ENCODE measurements at regions of chrX and their contacts with region 1.

Region 1: GRCh38 chrX:69133921-69134542 is 31.2 kb downstream of the PJA1 start:
- DNase-seq: peak in 1 of 2 experiments; percentile 49
- H3K4me3 ChIP-seq: no peak overlapping the region
- H3K27ac ChIP-seq: no peak overlapping the region
- H3K4me1 ChIP-seq: peaks cover 7 to 34% (median 26%) of the 10 kb centered on the region in 4 experiments
- H3K27me3 ChIP-seq: peaks cover 0 to 10% (median 4%) of the 10 kb centered on the region in 4 experiments; a peak in 4 of 7 replicates
- CTCF ChIP-seq: peak; percentile 41 to 77 (median 70)
- EP300 ChIP-seq: no peak
- POLR2A ChIP-seq: no peak
- RAD21 ChIP-seq: peak; percentile 50 to 70

Region 2: DNA sequence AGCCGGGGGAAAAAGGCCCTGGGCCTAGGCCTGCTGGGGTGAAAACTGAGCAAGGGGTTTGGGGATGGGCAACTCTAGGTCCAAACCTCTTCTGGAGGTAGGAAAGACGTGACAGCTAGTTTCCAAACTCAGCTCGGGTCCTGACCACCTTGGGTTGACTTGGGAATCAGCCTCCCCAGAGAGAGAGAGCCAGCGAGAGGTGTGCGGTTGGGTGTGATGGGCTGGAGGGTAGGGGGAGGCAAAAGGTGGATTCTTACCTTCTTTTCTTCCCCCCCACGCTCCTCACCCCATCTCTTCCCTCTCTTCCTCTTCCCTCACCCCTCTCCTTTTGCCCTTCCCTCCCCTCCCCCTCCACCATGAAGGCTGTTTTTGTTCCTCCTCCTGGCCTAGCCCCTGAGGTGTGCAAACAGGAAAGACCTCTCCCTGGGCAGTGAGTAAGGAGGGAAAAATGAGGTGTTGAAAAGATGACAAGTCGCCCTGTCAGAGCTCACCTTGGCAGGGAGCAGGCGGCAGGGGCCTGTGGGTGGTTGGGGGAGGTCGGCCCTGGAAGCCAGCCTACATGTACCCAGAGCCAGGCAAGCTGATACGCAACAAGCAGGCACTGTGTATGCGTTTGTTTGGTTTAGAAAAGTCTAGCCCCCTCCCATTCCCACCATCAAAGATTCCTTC is 16.4 kb after region 1 on chrX:
- CTCF ChIA-PET with region 1: interaction called, 9 read pairs
- POLR2A ChIA-PET with region 1: interaction called, 13 read pairs
- DNase-seq: no peak
- H3K4me3 ChIP-seq: peak overlapping the region in 2 of 4 experiments; percentile 22 to 49; a peak in 5 of 8 replicates
- H3K27ac ChIP-seq: peak overlapping the region; percentile 85
- H3K4me1 ChIP-seq: peaks cover 4 to 24% (median 17%) of the 10 kb centered on the region in 4 experiments; a peak in 6 of 7 replicates
- H3K27me3 ChIP-seq: no peaks in the 10 kb centered on the region
- CTCF ChIP-seq: no peak
- EP300 ChIP-seq: no peak
- POLR2A ChIP-seq: no peak
- RAD21 ChIP-seq: no peak

Region 3: GRCh38 chrX:69155786-69156520 is 21.9 kb after region 1 on chrX:
- CTCF ChIA-PET with region 1: interaction called, 8 read pairs
- POLR2A ChIA-PET with region 1: interaction called, 13 read pairs
- DNase-seq: no peak
- H3K4me3 ChIP-seq: no peak overlapping the region
- H3K27ac ChIP-seq: no peak overlapping the region
- H3K4me1 ChIP-seq: peaks cover 2 to 13% (median 7%) of the 10 kb centered on the region in 4 experiments; a peak in 6 of 7 replicates
- H3K27me3 ChIP-seq: no peaks in the 10 kb centered on the region
- CTCF ChIP-seq: no peak
- EP300 ChIP-seq: no peak
- POLR2A ChIP-seq: no peak
- RAD21 ChIP-seq: no peak

Measured in H1 (cell line).